ENCODE measurements at regions of chr19 and their contacts with region 1.

Region 1: GRCh38 chr19:45250832-45251451 is at the start of gene MARK4:
- DNase-seq: peak; percentile 72
- H3K4me3 ChIP-seq: peak within 1 kb of the TSS; percentile 95 to 100 (median 97)
- H3K27ac ChIP-seq: peak within 1 kb of the TSS; percentile 67 to 89 (median 81)
- H3K4me1 ChIP-seq: peaks cover 0 to 46% (median 40%) of the 10 kb centered on the region in 4 donors
- H3K27me3 ChIP-seq: no peaks in the 10 kb centered on the region
- CTCF ChIP-seq: no peak
- EP300 ChIP-seq: no peak
- POLR2A ChIP-seq: no peak
- total RNA-seq, gene MARK4: 12.7 to 39.9 (median 15.2) TPM

Region 2: DNA sequence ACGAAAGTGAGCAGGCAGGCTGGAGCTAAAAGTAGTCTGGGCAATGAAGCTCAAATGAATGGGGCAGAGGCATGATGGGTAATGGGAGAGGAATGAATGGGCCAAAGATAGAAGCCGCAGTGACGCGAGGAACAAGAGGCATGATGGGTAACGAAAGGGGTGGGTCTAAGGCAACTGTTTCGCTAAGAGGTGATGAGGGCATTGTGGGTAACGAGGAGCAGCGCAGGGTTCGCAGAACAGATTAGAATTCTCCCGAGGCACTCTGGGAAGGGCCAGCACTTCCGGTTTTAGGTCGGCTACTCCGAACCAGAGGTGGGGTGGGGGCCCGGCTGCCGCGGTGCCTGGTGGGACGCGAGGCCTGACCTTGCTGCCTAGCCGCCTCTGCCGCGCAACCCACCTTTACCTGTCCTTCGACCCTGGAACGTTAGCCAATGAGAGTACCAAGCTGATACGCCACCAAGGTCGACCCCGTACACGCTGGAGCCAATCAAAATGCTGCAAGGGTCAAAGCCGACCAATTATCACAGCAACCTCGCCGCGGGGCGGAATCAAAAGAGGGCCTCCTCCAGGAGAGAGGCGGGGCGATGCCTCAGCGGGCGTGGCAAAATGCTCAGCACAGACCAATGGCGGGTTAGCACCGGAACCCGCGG is 360.5 kb before region 1 on chr19:
- intact Hi-C with region 1: loop called (anchors 5 kb)
- DNase-seq: no peak
- H3K4me3 ChIP-seq: peak overlapping the region; percentile 50 to 65 (median 58)
- H3K27ac ChIP-seq: peak overlapping the region; percentile 91 to 96 (median 94)
- H3K4me1 ChIP-seq: peaks cover 0 to 26% (median 24%) of the 10 kb centered on the region in 4 donors
- H3K27me3 ChIP-seq: no peaks in the 10 kb centered on the region
- CTCF ChIP-seq: no peak
- EP300 ChIP-seq: peak in 1 of 4 donors; percentile 75
- POLR2A ChIP-seq: no peak

Region 3: GRCh38 chr19:45016388-45017319 is 234.3 kb before region 1 on chr19:
- intact Hi-C with region 1: loop called (anchors 10 kb)
- DNase-seq: peak; percentile 83
- H3K4me3 ChIP-seq: no peak overlapping the region
- H3K27ac ChIP-seq: peak overlapping the region in 3 of 4 donors; percentile 25 to 34 (median 33)
- H3K4me1 ChIP-seq: peaks cover 0 to 11% (median 9%) of the 10 kb centered on the region in 4 donors
- H3K27me3 ChIP-seq: no peaks in the 10 kb centered on the region
- CTCF ChIP-seq: peak; percentile 53 to 60 (median 56)
- EP300 ChIP-seq: no peak
- POLR2A ChIP-seq: no peak

Region 4: DNA sequence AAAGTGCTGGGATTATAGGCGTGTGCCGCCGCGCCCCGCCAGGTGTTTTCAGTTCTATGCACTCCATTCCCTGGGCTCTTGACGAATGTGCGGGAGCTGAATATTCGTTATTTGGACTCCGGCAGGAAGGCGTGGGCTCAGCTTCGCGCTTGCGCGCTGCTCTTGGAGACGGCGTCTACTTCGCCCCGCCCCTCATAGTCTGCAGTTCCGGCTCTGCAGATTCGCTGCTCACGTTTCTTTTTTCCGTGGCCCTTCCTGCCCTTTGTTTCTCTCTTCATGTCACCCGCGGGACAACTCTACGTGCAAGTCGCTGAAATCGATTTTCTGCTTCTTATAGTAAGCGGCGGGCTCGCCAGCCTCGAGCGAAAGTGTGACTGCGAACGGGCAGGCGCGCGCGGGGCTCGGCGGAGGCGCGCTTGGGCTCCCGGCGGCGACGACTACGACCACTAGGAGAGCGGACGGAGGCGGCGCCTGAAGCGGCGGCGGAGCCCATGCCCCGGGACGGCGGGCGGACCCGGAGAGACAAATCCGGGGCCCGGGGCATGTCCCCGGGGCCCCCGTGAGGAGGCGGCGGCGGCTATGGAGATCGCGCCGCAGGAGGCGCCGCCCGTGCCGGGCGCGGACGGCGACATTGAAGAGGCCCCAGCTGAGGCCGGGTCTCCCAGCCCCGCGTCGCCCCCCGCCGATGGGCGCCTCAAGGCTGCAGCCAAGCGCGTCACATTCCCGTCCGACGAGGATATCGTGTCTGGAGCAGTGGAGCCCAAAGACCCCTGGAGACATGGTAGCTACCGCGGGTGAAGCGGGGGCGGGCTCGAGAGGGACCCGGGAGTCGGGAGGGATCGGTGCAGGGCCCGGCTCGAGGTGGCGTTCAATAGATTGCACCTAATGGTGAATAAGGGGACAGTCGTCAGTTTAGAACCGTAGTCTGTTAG is 157.9 kb before region 1 on chr19 and contains the start of gene PPP1R37:
- intact Hi-C with region 1: loop called (anchors 5 kb)
- DNase-seq: peak; percentile 96
- H3K4me3 ChIP-seq: peak within 1 kb of the TSS; percentile 84 to 99 (median 90)
- H3K27ac ChIP-seq: peak within 1 kb of the TSS; percentile 84 to 90 (median 86)
- H3K4me1 ChIP-seq: peaks cover 0 to 67% (median 57%) of the 10 kb centered on the region in 4 donors
- H3K27me3 ChIP-seq: no peaks in the 10 kb centered on the region
- CTCF ChIP-seq: peak in 3 of 4 experiments; percentile 36 to 48 (median 43)
- EP300 ChIP-seq: peak in 1 of 4 donors; percentile 40
- POLR2A ChIP-seq: peak in 1 of 2 donors; percentile 5
- total RNA-seq, gene PPP1R37: 17.8 to 23.2 (median 19.9) TPM

Region 5: DNA sequence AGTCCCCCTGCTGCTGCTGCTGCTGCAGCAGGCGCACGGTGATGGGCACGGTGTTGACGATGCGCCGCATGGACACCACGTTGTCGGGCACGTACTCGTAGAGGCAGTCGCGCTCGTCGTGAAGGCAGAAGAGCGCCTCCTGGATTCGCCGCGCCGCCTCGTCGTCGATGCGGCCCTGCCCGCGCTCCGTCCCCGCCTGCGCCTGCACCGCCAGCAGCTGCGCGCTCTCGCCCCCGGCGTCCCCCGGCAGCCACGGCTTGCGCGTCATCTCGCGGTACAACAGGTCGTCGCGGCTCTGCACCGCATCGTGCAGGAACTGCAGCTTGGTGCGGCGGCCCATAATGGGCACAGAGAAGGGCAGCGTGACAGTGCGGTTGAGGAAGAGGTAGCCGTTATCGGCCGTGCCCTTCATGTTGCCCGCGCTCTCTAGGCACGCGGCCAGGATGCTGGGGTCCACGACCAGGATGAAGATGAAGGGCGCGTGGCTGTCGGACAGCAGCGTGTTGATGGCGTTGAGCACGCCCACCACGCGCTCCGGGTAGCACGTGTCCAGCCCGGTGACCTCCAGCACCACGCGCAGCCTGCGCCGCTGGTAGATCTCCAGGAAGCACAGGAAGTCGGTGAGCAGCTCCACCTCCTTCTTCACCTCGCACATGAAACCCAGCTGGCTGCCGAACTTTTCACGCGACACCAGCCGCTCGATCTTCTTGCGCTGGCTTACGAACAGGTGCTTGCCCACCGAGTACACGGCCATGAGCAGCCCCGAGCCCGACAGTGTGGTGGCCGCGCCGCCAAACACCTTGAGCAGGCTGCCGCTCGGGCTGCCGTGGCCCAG is 98.2 kb before region 1 on chr19:
- intact Hi-C with region 1: no loop called
- DNase-seq: no peak
- H3K4me3 ChIP-seq: peak overlapping the region in 3 of 4 donors; percentile 7 to 26 (median 23)
- H3K27ac ChIP-seq: no peak overlapping the region
- H3K4me1 ChIP-seq: peaks cover 0 to 28% (median 24%) of the 10 kb centered on the region in 4 donors
- H3K27me3 ChIP-seq: peaks cover 29 to 69% (median 41%) of the 10 kb centered on the region in 3 donors
- CTCF ChIP-seq: no peak
- EP300 ChIP-seq: no peak
- POLR2A ChIP-seq: no peak

Region 6: DNA sequence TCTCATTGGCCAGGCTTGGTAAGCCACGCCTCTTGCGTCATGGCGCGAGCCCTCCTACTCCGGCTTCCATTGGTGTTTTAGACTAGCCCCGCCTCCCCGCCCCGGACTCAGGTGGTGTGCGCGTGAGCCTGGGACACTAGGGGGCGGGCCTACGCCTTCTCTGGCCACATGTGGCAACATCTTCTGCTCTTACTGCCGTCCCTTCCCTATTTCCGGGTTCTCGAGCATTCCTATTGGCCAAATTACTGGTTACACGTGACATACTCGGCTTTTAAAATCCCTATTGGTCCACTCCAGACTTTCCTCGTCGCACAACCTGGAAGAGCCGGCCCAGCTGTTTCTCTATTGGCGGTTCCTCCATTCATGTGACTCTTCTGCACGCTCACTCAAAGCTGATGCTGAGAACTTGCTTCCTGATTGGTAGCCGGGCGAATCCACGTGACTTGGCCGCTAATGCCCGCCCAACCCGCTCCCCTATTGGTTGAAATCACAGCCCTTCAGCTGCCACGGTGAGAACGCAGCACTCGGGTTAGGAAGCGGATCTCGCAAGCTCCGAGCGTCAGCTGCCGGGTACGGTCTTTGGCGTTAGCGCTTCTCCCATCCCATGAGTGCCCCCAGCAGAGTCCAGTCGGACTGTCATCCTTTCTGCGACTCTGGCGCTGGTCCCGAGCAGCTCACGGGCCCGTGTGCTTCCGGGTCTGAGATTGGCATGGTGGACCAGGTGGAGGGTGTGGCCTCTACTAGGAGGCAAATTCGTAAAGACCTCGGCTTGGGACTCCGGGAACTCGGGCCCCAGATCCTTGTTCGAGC is 72.5 kb before region 1 on chr19 and contains the start of gene BLOC1S3:
- intact Hi-C with region 1: loop called (anchors 2 kb)
- DNase-seq: peak; percentile 100
- H3K4me3 ChIP-seq: peak within 1 kb of the TSS; percentile 75 to 89 (median 86)
- H3K27ac ChIP-seq: peak within 1 kb of the TSS; percentile 94 to 98 (median 95)
- H3K4me1 ChIP-seq: peaks cover 0 to 38% (median 30%) of the 10 kb centered on the region in 4 donors
- H3K27me3 ChIP-seq: no peaks in the 10 kb centered on the region
- CTCF ChIP-seq: no peak
- EP300 ChIP-seq: peak in 1 of 4 donors; percentile 70
- POLR2A ChIP-seq: peak; percentile 82 to 83
- total RNA-seq, gene BLOC1S3: 6.1 to 10.9 (median 7.8) TPM

Region 7: DNA sequence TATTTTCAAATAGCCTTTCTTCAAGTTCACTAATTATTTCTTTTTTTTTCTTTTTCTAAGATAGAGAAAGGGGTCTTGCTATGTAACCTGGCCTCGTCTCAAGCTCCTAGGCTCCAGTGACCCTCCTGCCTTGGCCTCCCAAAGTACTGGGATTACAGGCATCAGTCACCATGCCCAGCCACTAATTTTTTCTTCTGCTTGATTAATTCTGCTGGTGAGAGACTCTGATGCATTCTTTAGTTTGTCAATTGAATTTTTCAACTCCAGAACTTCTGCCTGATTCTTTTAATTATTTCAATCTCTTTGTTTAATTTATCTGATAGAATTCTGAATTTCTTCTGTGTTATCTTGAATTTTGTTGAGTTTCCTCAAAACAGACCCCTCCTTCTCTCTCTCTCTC is 61.0 kb before region 1 on chr19:
- intact Hi-C with region 1: no loop called
- DNase-seq: no peak
- H3K4me3 ChIP-seq: no peak overlapping the region
- H3K27ac ChIP-seq: no peak overlapping the region
- H3K4me1 ChIP-seq: no peaks in the 10 kb centered on the region
- H3K27me3 ChIP-seq: no peaks in the 10 kb centered on the region
- CTCF ChIP-seq: no peak
- EP300 ChIP-seq: no peak
- POLR2A ChIP-seq: no peak

Region 8: DNA sequence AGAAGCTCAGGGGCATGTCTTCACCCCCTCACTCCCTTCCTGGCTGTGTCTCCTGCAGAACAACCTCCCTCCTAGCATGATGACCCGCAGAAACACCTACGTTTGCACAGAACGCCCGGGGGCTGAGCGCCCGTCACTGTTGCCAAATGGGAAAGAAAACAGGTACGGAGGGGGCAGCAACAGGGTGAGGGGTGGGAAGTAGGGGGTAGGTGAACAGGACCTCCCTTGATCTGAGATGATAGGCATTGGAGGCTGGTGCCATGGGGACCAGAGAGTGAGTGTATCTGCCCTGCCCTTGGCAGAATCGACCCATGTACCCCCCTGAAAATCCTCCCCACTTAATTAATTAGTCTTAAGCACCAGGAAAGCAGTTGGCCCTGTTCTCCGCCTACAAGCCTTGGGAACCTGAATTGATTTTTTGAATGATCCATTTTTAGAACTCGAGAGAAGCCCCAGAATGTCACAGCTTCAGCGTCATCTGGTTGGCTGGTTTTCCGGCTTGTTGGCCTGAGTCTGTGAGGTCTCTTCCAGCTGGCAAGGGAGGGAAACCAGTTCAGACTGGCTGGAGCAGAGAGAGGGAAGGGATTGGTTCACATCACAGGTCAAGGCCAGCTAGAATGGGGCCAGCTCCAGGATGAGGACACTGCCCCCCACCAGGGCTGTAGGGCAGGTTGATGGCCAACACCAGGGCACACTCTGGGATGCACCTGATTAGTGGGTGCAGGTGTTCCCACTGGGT is 43.5 kb after region 1 on chr19:
- intact Hi-C with region 1: no loop called
- DNase-seq: no peak
- H3K4me3 ChIP-seq: no peak overlapping the region
- H3K27ac ChIP-seq: peak overlapping the region in 1 of 4 donors; percentile 5
- H3K4me1 ChIP-seq: peaks cover 0 to 9% (median 2%) of the 10 kb centered on the region in 4 donors
- H3K27me3 ChIP-seq: no peaks in the 10 kb centered on the region
- CTCF ChIP-seq: no peak
- EP300 ChIP-seq: no peak
- POLR2A ChIP-seq: no peak

Region 9: GRCh38 chr19:45339629-45340028 is 88.7 kb after region 1 on chr19:
- intact Hi-C with region 1: loop called (anchors 2 kb)
- DNase-seq: no peak
- H3K4me3 ChIP-seq: no peak overlapping the region
- H3K27ac ChIP-seq: no peak overlapping the region
- H3K4me1 ChIP-seq: peaks cover 0 to 15% (median 10%) of the 10 kb centered on the region in 4 donors
- H3K27me3 ChIP-seq: peaks cover 18 to 40% (median 21%) of the 10 kb centered on the region in 3 donors
- CTCF ChIP-seq: no peak
- EP300 ChIP-seq: no peak
- POLR2A ChIP-seq: no peak

Measured in sigmoid colon (tissue), 7 donors.